Right ventricle myocardium superior (tissue), 1 donor: ENCODE measurements at regions of chr13 and their contacts with region 1.

Region 1: GRCh38 chr13:26400545-26400944 is 146.6 kb downstream of the CDK8 start:
- DNase-seq: no peak
- ATAC-seq: no peak

Region 2: GRCh38 chr13:26168237-26168820 is 232.2 kb before region 1 on chr13:
- intact Hi-C with region 1: no loop called
- DNase-seq: no peak
- ATAC-seq: no peak

Region 3: GRCh38 chr13:26236296-26236695 is 164.2 kb before region 1 on chr13:
- intact Hi-C with region 1: no loop called
- DNase-seq: no peak
- ATAC-seq: no peak

Region 4: DNA sequence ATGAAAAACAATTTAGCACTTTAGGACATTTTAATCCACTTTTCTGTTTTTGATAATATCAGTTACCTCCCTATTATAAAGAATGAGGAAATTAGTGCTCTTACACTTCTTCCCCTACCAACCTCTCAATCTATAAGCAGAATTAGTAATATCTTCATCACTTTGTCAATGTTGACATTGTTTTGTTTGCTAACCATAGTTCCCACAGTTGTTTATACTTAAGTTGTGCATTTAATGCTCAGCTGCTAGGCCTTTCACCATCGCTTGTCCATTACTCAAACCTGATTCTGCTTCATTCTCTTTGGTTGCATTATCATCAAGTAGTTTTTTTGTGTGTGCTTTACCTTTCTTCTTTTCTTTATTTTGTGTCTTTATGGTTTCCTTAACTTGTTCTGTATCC is 14.5 kb before region 1 on chr13:
- intact Hi-C with region 1: loop called (anchors 1 kb)
- DNase-seq: no peak
- ATAC-seq: no peak